ENCODE measurements at regions of chr11 and their contacts with region 1.

Region 1: DNA sequence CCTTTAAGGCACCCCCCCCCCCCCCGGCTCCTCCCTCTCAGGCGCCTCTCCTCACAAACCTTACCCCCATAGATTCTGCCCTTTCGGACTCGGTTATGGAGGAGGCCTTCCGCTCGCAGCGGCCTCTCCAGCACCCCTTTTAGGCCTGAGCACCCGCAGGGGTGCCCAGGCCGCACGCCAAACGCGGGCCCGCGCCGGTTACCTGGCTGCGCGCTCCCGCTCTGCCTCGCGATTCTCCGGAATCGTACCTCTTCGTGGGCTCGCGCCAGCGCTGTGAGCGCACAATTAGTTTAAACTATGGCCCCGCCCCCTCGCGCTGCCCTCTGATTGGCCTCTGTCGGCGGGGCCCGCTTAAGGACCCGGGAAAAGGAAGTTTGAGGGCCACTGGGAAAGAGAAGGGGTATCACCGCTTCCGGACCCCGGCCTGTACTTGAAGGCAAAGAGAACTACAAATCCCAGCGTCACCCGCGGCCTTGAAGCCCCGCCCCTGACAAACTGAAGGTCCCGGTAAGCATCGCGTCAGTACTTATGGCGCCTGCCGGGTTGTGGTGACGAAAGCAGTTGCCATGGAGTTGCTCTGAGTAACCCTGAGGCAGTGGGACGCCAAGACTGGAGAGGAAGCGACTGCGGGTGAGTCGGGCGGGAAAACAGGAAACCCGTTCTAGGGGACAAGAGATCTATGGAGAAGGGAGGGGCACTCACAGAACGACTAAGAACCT is at the starts of genes LRRC51 and NUMA1:
- DNase-seq: peak; percentile 98 to 100
- H3K4me3 ChIP-seq: peak within 1 kb of the TSS; percentile 66 to 100 (median 86)
- H3K27ac ChIP-seq: peak within 1 kb of the TSS; percentile 84
- H3K4me1 ChIP-seq: no peaks in the 10 kb centered on the region; a peak in 2 of 7 replicates
- H3K27me3 ChIP-seq: no peaks in the 10 kb centered on the region
- CTCF ChIP-seq: no peak
- EP300 ChIP-seq: no peak
- POLR2A ChIP-seq: peak in 1 of 2 experiments; percentile 74; a peak in 1 of 3 replicates
- RAD21 ChIP-seq: no peak
- total RNA-seq, gene LRRC51: 6.8 and 7.9 TPM in 2 replicates
- total RNA-seq, gene NUMA1: 107 and 108 TPM in 2 replicates

Region 2: GRCh38 chr11:72024069-72024754 is 56.2 kb before region 1 on chr11:
- CTCF ChIA-PET with region 1: interaction called, 44 read pairs
- POLR2A ChIA-PET with region 1: interaction called, 4 read pairs
- DNase-seq: no peak
- H3K4me3 ChIP-seq: no peak overlapping the region
- H3K27ac ChIP-seq: peak overlapping the region; percentile 26; the same call in 1 of the 2 replicates
- H3K4me1 ChIP-seq: no peaks in the 10 kb centered on the region
- H3K27me3 ChIP-seq: no peaks in the 10 kb centered on the region
- CTCF ChIP-seq: no peak
- EP300 ChIP-seq: no peak
- POLR2A ChIP-seq: no peak
- RAD21 ChIP-seq: no peak

Region 3: DNA sequence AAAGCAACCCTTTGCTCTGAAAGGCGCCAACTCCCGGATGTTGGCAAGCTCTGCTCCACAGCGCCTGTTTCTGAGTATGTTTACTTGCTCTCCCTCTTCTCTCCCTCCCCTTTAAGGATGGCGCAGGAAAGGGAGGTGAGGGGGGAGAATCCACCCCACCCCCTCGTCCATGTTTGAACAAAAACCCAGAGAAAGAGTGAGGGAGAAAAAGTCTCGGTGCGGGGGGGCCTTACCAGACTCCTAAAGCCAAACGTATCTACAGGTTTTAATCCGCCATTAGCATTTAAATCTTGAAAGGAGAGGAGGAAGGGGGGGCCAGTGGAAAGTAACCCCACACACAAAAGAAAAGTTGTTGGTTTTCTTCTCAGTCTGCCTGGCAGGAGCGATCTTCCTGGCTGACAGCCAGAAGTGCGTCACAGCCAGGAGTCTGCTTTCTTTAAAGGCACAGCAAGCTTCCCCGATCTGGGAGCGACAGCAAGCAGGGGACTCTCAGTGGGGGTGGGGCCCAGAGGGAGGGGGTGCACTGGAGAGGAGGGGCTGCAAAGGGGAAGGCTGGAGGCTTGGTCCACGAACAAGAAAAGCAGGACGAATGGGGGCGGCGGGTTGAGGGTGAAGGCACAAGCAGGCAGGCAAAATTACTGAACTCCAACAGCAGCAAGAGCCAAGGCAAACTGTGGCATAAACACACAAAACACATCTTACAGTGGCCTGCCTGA is 39.5 kb before region 1 on chr11:
- CTCF ChIA-PET with region 1: interaction called, 7 read pairs
- POLR2A ChIA-PET with region 1: interaction called, 33 read pairs
- DNase-seq: peak; percentile 50 to 73
- H3K4me3 ChIP-seq: peak overlapping the region; percentile 34 to 55 (median 42); a peak in 7 of 8 replicates
- H3K27ac ChIP-seq: peak overlapping the region; percentile 92
- H3K4me1 ChIP-seq: peaks cover 29 to 36% (median 33%) of the 10 kb centered on the region in 4 experiments
- H3K27me3 ChIP-seq: no peaks in the 10 kb centered on the region
- CTCF ChIP-seq: no peak
- EP300 ChIP-seq: peak in 1 of 2 experiments; percentile 31; a peak in 1 of 3 replicates
- POLR2A ChIP-seq: peak in 1 of 2 experiments; percentile 21; a peak in 2 of 3 replicates
- RAD21 ChIP-seq: no peak

Region 4: GRCh38 chr11:72102946-72103753 is 22.7 kb after region 1 on chr11 and contains the start of gene LAMTOR1:
- CTCF ChIA-PET with region 1: interaction called, 5 read pairs
- POLR2A ChIA-PET with region 1: interaction called, 144 read pairs
- DNase-seq: peak; percentile 97 to 98
- H3K4me3 ChIP-seq: peak within 1 kb of the TSS; percentile 95 to 98 (median 97)
- H3K27ac ChIP-seq: peak within 1 kb of the TSS; percentile 86
- H3K4me1 ChIP-seq: peaks cover 3 to 14% (median 5%) of the 10 kb centered on the region in 4 experiments; a peak in 6 of 7 replicates
- H3K27me3 ChIP-seq: no peaks in the 10 kb centered on the region
- CTCF ChIP-seq: peak; percentile 16 to 60 (median 36); a peak in 3 of 4 replicates
- EP300 ChIP-seq: peak in 1 of 2 experiments; percentile 39; a peak in 1 of 3 replicates
- POLR2A ChIP-seq: peak; percentile 88 to 96
- RAD21 ChIP-seq: peak; percentile 21 to 37; a peak in 2 of 4 replicates
- total RNA-seq, gene LAMTOR1: 81.0 and 82.1 TPM in 2 replicates

Region 5: GRCh38 chr11:72112321-72113219 is 32.2 kb after region 1 on chr11 and contains the start of gene ANAPC15:
- CTCF ChIA-PET with region 1: no interaction called
- POLR2A ChIA-PET with region 1: interaction called, 10 read pairs
- DNase-seq: peak; percentile 94 to 96
- H3K4me3 ChIP-seq: peak within 1 kb of the TSS; percentile 78 to 94 (median 87)
- H3K27ac ChIP-seq: peak within 1 kb of the TSS; percentile 99
- H3K4me1 ChIP-seq: peaks cover 0 to 4% (median 0%) of the 10 kb centered on the region in 4 experiments; a peak in 4 of 7 replicates
- H3K27me3 ChIP-seq: peaks cover 0 to 9% (median 0%) of the 10 kb centered on the region in 4 experiments; a peak in 6 of 7 replicates
- CTCF ChIP-seq: no peak
- EP300 ChIP-seq: no peak
- POLR2A ChIP-seq: peak; percentile 97 to 100
- RAD21 ChIP-seq: peak in 1 of 2 experiments; percentile 15; a peak in 1 of 4 replicates
- total RNA-seq, gene ANAPC15: 70.0 and 74.9 TPM in 2 replicates

Region 6: GRCh38 chr11:72123117-72123653 is 42.8 kb after region 1 on chr11:
- CTCF ChIA-PET with region 1: no interaction called
- POLR2A ChIA-PET with region 1: no interaction called
- DNase-seq: no peak
- H3K4me3 ChIP-seq: no peak overlapping the region
- H3K27ac ChIP-seq: no peak overlapping the region
- H3K4me1 ChIP-seq: no peaks in the 10 kb centered on the region
- H3K27me3 ChIP-seq: peaks cover 0 to 6% (median 0%) of the 10 kb centered on the region in 4 experiments; a peak in 2 of 7 replicates
- CTCF ChIP-seq: no peak
- EP300 ChIP-seq: no peak
- POLR2A ChIP-seq: no peak
- RAD21 ChIP-seq: no peak

Measured in H1 (cell line).